BJ (cell line): ENCODE measurements at regions of chr11 and their contacts with region 1.

Region 1: DNA sequence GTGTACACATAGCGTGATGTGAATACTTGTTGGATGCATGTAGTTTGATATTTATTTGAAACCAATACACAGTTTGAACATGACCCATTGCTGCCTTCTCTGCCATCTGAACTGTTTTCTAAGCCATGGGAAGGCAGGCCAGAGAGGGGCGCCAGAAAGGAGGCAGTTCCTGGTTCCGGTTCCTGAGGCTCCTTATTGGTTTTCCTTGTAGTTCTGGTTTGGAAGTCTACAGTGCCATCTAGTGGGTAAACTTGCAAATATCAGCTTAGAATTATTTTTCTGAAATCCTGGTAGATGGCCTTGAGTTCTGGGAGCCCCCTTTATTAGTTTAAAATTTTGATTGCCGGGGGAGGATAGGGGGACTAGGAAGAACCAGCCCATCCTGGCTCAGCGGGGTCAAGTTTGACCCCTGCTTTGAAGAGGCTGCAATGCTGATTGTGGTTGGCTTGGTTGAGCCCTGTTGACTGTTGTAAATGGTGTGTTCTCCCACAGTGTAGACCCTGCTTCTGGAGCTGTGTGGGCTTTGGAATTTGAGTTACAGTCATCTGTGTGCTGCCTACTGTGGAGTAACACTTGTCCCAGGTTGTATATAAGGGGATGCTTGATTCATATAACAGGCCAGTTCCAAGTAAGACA is 48.4 kb downstream of the GRAMD1B start:
- DNase-seq: no peak
- H3K4me3 ChIP-seq: no peak overlapping the region
- H3K27me3 ChIP-seq: no peaks in the 10 kb centered on the region
- CTCF ChIP-seq: peak; percentile 69

Region 2: DNA sequence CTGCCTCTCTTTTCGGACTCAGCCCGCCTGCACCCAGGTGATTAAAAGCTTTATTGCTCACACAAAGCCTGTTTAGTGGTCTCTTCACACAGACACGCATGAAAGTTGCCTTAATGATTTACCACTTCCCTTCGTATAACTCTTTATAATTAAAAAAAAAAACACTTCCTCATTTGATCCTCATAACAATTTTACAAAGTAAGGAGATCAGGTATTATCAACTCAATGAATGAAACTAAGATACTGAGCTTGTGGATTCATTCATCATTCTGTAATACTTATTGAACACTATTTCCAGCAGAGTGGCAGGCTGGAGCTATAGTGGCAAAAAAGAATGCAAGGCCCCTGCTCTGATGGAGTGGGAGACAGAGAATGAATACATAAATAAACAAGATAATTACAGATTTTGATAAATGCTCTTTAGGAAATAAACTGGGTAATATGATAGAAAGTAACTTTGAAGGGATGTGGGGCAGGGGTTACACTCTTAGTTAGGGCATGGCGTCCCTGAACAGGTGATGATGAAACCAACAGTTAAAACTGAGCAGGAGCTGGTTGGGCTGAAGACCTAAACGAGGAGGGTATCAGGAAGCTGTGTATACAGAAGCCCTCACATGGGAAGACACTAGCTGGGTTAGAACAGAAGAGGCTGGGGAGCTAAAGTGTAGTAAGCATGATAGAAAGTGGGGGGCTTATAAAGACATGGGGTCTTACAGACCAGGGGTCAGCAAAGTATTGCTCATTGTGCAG is 645.6 kb before region 1 on chr11:
- CTCF ChIA-PET with region 1: no interaction called
- POLR2A ChIA-PET with region 1: no interaction called
- DNase-seq: no peak
- H3K4me3 ChIP-seq: no peak overlapping the region
- H3K27me3 ChIP-seq: no peaks in the 10 kb centered on the region
- CTCF ChIP-seq: no peak

Region 3: DNA sequence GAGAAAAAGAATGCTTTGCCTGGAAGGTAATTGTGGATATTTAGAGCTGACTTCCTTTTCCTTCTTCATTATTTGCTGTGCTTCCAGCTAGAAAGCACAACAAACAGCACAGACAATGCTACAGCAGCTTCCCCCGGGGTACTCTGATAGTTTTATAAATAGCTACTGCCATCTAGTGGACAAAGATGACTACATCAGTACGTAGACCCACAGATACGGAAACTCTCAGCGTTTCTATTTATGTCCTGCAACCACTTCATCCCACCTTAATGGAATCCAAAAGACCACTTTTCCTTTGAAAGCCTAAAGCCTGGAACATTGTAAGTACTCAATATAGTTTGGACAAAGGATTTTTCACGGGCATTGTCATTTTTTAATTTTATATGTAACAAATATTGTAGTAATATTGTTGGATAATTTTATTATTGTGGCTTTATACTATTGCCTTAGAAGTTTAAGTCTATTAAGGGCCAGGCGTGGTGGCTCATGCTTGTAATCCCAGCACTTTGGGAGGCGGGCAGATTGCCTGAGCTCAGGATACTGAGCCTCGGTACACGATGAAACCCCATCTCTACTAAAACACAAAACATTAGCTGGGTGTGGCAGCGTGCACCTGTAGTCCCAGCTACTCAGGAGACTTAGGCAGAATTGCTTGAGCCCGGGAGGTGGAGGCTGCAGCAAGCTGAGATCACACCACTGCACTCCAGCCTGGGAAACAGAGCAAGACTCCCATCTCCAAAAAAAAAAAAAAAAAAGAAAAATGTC is 424.0 kb before region 1 on chr11:
- CTCF ChIA-PET with region 1: interaction called, 4 read pairs
- POLR2A ChIA-PET with region 1: interaction called, 20 read pairs
- DNase-seq: no peak
- H3K4me3 ChIP-seq: no peak overlapping the region
- H3K27me3 ChIP-seq: no peaks in the 10 kb centered on the region
- CTCF ChIP-seq: peak; percentile 63

Region 4: DNA sequence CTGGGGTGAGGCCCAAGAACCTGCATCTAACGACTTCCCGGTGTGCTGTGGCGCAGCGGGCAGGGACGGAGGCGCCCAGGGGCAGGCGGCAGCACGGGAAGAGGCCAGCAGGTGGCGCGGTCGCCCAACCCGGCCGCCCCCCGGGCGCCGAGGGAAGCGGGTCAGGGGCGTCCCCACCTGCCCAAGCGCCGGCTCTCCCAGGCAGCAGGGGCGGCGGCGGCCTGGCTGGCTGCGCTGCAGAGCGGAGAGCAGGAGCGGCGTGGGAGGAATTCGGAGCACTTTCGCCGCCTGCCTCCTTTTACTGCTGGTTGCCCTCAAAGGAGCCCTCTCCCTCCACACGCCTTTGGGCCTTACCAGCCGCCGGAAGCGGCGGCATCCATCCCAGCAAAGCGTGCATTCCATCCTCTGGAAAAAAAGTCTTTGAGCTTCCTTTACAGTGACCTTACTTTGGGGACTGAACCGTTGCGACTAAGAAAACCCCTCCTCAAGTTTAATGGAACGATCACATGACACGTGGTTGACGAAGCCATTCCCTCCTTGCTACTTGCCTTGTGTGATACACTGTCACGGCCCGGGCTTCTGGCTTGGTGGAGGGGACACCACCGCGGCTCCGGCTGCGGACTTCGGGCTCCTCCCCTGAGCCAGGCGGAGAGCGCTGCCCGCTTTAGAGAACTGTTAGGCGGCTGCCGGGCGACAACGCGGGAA is 176.6 kb before region 1 on chr11:
- CTCF ChIA-PET with region 1: interaction called, 28 read pairs
- POLR2A ChIA-PET with region 1: no interaction called
- DNase-seq: no peak
- H3K4me3 ChIP-seq: peak overlapping the region; percentile 31
- H3K27me3 ChIP-seq: no peaks in the 10 kb centered on the region
- CTCF ChIP-seq: peak; percentile 66

Region 5: GRCh38 chr11:123308077-123308476 is 170.4 kb before region 1 on chr11:
- CTCF ChIA-PET with region 1: interaction called, 12 read pairs
- POLR2A ChIA-PET with region 1: no interaction called
- DNase-seq: peak; percentile 76
- H3K4me3 ChIP-seq: no peak overlapping the region
- H3K27me3 ChIP-seq: peaks cover 5% of the 10 kb centered on the region; the same call in 1 of the 2 replicates
- CTCF ChIP-seq: no peak

Region 6: DNA sequence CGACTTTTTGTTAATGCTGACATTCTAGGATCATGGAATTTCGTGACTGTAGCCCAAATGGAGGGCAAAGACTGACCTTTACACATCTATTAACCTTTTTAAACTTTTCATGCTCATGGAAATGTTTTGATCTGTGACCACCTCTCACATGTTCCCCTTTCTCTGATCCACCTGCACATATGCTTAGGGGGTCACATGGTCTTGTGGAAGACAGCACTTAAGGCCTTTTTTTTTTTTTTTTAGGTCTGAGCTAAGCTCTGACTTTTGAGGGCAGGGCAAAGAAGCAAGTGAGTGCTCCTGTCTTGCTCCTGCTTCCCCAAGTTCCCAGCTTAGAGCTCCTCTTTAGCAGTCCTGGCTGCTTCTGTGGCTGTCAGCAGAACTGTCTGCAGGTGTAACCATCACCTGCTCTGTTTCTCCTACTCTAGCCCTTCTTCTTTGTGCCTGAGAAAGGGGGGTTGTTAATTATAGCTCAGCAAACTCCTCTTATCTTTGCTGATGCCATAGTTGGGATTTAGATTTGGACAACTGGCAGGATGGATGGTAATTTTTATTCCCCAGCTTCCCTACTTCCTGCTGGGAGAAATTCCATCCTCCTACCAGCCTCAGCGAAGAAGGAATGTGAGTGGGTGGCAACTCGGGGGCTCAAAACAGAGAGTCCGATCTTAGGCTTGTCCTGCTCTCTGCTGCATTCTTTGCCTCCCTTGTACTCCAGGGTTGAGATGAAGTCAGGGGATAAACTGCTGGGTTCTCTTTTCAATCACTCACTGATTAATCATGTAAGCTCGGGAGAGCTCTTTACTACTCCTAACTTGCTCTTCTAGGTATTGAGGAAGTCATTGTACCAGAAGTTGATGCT is 16.0 kb after region 1 on chr11:
- CTCF ChIA-PET with region 1: interaction called, 13 read pairs
- POLR2A ChIA-PET with region 1: no interaction called
- DNase-seq: no peak
- H3K4me3 ChIP-seq: no peak overlapping the region
- H3K27me3 ChIP-seq: no peaks in the 10 kb centered on the region
- CTCF ChIP-seq: no peak

Region 7: DNA sequence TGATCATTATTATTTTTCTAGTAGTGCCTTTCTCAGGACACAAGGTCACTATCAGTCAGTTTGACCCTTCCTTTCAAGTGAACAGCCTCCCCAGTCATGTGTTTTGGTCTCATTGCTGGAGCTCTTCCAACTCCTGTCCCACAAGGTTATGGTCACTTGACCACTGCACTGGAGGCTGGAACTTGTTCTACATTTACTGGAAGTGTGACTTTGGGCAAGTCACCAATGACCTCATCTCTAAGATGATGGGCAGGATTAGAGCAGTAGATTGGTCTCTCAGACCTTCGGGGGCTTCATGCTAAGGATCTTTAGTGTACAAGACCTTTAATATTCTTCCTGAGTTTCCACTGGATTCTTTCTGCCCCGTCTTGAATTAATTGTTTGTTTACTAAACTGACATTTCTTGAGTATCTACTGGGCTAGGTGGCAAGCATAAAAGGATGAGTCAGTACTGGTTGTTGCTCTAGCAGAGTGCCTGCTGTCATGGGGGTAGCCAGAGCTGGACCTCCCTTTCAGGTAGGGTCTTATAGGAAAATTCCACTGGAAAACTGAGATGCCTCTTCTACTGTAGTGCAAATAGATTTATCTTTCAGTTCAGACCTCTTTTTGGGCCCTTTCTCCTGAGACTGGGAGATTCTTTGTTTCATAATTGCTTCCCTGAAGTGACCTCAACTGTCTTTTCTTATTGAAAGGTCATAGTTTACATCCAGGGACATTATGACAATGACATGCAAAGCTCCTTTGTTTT is 58.4 kb after region 1 on chr11:
- CTCF ChIA-PET with region 1: no interaction called
- POLR2A ChIA-PET with region 1: no interaction called
- DNase-seq: no peak
- H3K4me3 ChIP-seq: no peak overlapping the region
- H3K27me3 ChIP-seq: no peaks in the 10 kb centered on the region
- CTCF ChIP-seq: no peak

Region 8: DNA sequence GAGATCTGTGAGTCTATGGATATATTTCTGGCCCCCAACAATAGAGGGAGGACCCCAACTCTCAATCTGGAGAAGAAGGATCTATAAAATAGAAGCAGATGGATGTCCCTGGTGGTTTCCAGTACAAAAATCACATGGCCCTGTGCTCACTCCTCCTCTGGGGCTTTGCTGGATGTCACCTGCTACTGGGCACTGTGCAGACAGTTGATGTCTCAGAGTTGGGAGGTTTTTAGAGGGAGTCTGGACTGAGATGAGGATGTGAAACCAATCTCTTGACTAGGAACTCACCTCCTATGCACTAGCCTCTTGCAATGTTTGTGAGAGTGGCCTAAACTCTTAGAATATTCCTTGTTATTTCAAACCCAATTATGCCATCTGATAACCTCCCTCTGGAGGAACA is 68.7 kb after region 1 on chr11:
- CTCF ChIA-PET with region 1: no interaction called
- POLR2A ChIA-PET with region 1: no interaction called
- DNase-seq: no peak
- H3K4me3 ChIP-seq: no peak overlapping the region
- H3K27me3 ChIP-seq: no peaks in the 10 kb centered on the region
- CTCF ChIP-seq: no peak

Region 9: DNA sequence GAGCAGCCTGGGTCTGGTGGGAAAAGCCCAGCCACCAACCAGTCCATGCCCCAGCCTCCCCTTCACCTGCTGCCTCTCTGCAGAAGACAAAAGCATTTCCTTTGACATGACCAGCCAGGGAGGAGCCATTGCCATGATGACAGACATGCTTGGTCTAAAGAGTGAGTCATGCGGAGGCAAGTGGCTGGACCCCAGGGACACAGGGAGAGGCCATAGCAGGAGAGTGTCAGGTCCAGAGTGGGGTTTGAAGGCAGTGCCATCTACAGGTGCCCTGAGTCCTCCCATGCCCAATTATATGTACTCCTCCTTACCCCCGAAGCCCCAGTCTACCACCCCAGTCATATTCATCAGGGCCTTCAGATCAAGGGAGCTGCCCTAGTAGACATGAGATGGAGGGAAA is 108.6 kb after region 1 on chr11:
- CTCF ChIA-PET with region 1: no interaction called
- POLR2A ChIA-PET with region 1: no interaction called
- DNase-seq: no peak
- H3K4me3 ChIP-seq: no peak overlapping the region
- H3K27me3 ChIP-seq: no peaks in the 10 kb centered on the region
- CTCF ChIP-seq: no peak